ENCODE measurements at regions of chr6 and their contacts with region 1.

Region 1: GRCh38 chr6:83884523-83884922 is 25.0 kb downstream of the CYB5R4 start:
- DNase-seq: no peak
- ATAC-seq: no peak
- H3K4me3 ChIP-seq: no peak overlapping the region
- H3K27ac ChIP-seq: no peak overlapping the region
- H3K4me1 ChIP-seq: peaks cover 0 to 5% of the 10 kb centered on the region in 2 donors
- H3K27me3 ChIP-seq: no peaks in the 10 kb centered on the region
- CTCF ChIP-seq: peak; percentile 37 to 59 (median 51)
- POLR2A ChIP-seq: no peak

Region 2: GRCh38 chr6:84220809-84221409 is 336.4 kb after region 1 on chr6:
- in situ Hi-C with region 1: loop called (anchors 5 to 25 kb)
- intact Hi-C with region 1: loop called (anchors 2 kb)
- DNase-seq: no peak
- ATAC-seq: no peak
- H3K4me3 ChIP-seq: no peak overlapping the region
- H3K27ac ChIP-seq: no peak overlapping the region
- H3K4me1 ChIP-seq: no peaks in the 10 kb centered on the region
- H3K27me3 ChIP-seq: no peaks in the 10 kb centered on the region
- CTCF ChIP-seq: peak in 4 of 5 experiments; percentile 11 to 44 (median 23)
- POLR2A ChIP-seq: no peak

Region 3: GRCh38 chr6:84774157-84774984 is 889.8 kb after region 1 on chr6:
- in situ Hi-C with region 1: no loop called
- intact Hi-C with region 1: loop called (anchors 10 kb)
- DNase-seq: peak in 1 of 2 donors; percentile 13
- ATAC-seq: peak; percentile 21 to 29
- H3K4me3 ChIP-seq: peak overlapping the region; percentile 48 to 57 (median 51)
- H3K27ac ChIP-seq: peak overlapping the region in 3 of 4 donors; percentile 41 to 49 (median 47)
- H3K4me1 ChIP-seq: peaks cover 0 to 7% of the 10 kb centered on the region in 2 donors
- H3K27me3 ChIP-seq: peaks cover 52 to 72% (median 65%) of the 10 kb centered on the region in 3 donors
- CTCF ChIP-seq: peak in 1 of 5 experiments; percentile 43
- POLR2A ChIP-seq: no peak

Measured in gastrocnemius medialis (tissue), 4 donors.